CD4-positive, alpha-beta T cell (primary cell): ENCODE measurements at regions of chr13 and their contacts with region 1.

Region 1: DNA sequence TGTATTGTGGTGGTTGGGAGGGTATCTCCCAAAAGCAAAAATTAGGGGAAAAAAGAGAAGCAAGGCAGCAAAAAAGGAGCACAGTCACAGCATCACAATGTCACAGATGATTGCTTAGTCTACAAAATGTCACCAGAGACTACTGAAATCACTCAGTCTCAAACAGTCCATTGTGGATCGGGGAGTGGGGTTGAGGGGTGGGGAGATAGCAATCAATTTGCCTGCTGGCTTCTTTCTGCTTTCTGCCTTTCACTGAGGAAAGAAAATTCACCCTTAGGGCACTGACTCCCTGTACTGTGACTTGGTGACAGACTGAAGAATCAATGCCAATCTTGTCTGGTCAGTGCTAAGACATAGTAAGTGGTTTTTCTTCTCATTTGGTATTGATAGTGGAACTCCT is 2127.1 kb upstream of the PCDH20 start:
- DNase-seq: no peak
- ATAC-seq: no peak
- H3K4me3 ChIP-seq: no peak overlapping the region
- H3K4me3 Mint-ChIP-seq: no peak overlapping the region
- H3K27ac ChIP-seq: no peak overlapping the region
- H3K27ac Mint-ChIP-seq: no peak overlapping the region
- H3K4me1 ChIP-seq: no peaks in the 10 kb centered on the region
- H3K4me1 Mint-ChIP-seq: no peaks in the 10 kb centered on the region
- H3K27me3 ChIP-seq: no peaks in the 10 kb centered on the region
- H3K27me3 Mint-ChIP-seq: no peaks in the 10 kb centered on the region
- CTCF ChIP-seq: no peak

Region 2: GRCh38 chr13:63517371-63517770 is 25.4 kb before region 1 on chr13:
- CTCF ChIA-PET with region 1: no interaction called
- POLR2A ChIA-PET with region 1: no interaction called
- intact Hi-C with region 1: loop called in 1 of 2 experiments (anchors 2 kb)
- DNase-seq: no peak
- ATAC-seq: no peak
- H3K4me3 ChIP-seq: no peak overlapping the region
- H3K4me3 Mint-ChIP-seq: no peak overlapping the region
- H3K27ac ChIP-seq: no peak overlapping the region
- H3K27ac Mint-ChIP-seq: no peak overlapping the region
- H3K4me1 ChIP-seq: no peaks in the 10 kb centered on the region
- H3K4me1 Mint-ChIP-seq: no peaks in the 10 kb centered on the region
- H3K27me3 ChIP-seq: no peaks in the 10 kb centered on the region
- H3K27me3 Mint-ChIP-seq: no peaks in the 10 kb centered on the region
- CTCF ChIP-seq: no peak

Region 3: DNA sequence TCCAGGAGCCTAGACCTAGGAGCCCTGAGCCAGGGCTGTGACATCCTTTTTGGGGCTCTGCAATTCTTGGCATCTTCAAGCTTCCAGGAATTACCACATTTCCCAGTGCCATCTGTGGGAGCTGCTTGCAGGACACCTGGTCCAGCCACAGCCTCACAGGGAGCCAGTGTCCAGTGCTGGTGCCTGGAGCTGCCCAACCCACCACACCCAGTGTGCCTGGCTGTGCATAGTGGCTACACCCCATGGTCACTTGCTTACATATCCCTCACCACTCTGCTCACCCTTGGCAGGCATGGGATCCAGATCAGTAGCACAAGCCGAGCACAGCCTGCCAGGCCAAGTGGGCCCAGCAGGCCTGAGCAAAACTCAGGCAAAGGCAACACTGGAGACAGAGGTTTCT is 24.3 kb after region 1 on chr13:
- CTCF ChIA-PET with region 1: no interaction called
- POLR2A ChIA-PET with region 1: no interaction called
- intact Hi-C with region 1: loop called in 1 of 2 experiments (anchors 2 kb)
- DNase-seq: no peak
- ATAC-seq: no peak
- H3K4me3 ChIP-seq: no peak overlapping the region
- H3K4me3 Mint-ChIP-seq: no peak overlapping the region
- H3K27ac ChIP-seq: no peak overlapping the region
- H3K27ac Mint-ChIP-seq: no peak overlapping the region
- H3K4me1 ChIP-seq: no peaks in the 10 kb centered on the region
- H3K4me1 Mint-ChIP-seq: no peaks in the 10 kb centered on the region
- H3K27me3 ChIP-seq: no peaks in the 10 kb centered on the region
- H3K27me3 Mint-ChIP-seq: no peaks in the 10 kb centered on the region
- CTCF ChIP-seq: no peak